K562 (cell line): ENCODE measurements at regions of chr16 and their contacts with region 1.

Region 1: GRCh38 chr16:48385272-48386150 is at the start of gene SIAH1:
- DNase-seq: peak; percentile 91 to 94 (median 92)
- ATAC-seq: peak; percentile 81
- H3K4me3 ChIP-seq: peak within 1 kb of the TSS; percentile 85
- H3K27ac ChIP-seq: peak within 1 kb of the TSS; percentile 95
- H3K4me1 ChIP-seq: peaks cover 15% of the 10 kb centered on the region in 2 experiments; a peak in 4 of 5 replicates
- H3K27me3 ChIP-seq: no peaks in the 10 kb centered on the region
- CTCF ChIP-seq: no peak
- EP300 ChIP-seq: no peak
- POLR2A ChIP-seq: peak; percentile 80
- RAD21 ChIP-seq: no peak
- polyA plus RNA-seq, gene SIAH1: 4.1 to 6.5 TPM

Region 2: GRCh38 chr16:48365581-48366164 is 19.8 kb before region 1 on chr16:
- CTCF ChIA-PET with region 1: no interaction called
- POLR2A ChIA-PET with region 1: interaction called, 35 read pairs
- in situ Hi-C with region 1: no loop called
- intact Hi-C with region 1: loop called (anchors 2 kb)
- DNase-seq: peak; percentile 86 to 93 (median 89)
- ATAC-seq: peak; percentile 98
- H3K4me3 ChIP-seq: peak overlapping the region; percentile 50
- H3K27ac ChIP-seq: peak overlapping the region; percentile 80
- H3K4me1 ChIP-seq: peaks cover 16 to 31% of the 10 kb centered on the region in 2 experiments
- H3K27me3 ChIP-seq: no peaks in the 10 kb centered on the region
- CTCF ChIP-seq: peak; percentile 14 to 27 (median 20); a peak in 2 of 6 replicates
- EP300 ChIP-seq: no peak
- POLR2A ChIP-seq: peak; percentile 80
- RAD21 ChIP-seq: no peak

Region 3: DNA sequence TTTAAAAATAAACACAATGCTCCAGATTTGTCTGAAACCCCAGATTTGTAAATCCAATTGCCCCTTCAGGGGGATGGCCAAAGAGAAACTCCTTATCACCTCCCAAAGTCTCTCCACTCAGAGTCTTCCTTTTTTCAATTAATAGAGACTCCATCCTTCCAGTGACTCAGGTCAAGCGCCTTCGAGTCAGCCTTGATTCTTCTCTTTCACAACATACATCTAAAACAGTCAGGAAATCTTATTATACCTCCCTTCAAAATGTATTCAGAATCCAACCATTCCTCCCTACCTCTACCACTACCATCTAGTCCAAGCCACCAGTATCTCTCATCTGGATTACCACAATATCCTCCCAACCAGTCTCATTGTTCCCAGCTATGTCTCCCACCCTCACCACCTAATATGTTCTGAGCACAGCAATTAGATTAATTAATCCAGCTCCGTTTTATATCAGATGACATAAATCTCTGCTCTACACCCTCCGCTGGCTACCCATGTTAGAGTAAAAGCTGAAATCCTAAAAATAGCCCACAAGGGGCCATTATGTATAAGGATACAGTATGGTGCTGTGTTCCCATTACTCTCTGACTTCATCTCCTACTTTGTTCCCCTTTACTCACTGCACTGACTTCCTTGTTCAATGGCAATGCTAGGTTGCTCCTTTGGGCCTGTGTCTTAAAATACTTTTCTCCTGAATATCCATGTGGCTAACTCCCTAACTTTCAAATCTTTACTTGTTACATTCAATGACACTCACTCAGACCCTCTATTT is 12.1 kb before region 1 on chr16:
- CTCF ChIA-PET with region 1: no interaction called
- POLR2A ChIA-PET with region 1: interaction called, 16 read pairs
- in situ Hi-C with region 1: no loop called
- intact Hi-C with region 1: no loop called
- DNase-seq: no peak
- ATAC-seq: peak; percentile 39; the same call in 2 of the 3 replicates
- H3K4me3 ChIP-seq: no peak overlapping the region
- H3K27ac ChIP-seq: no peak overlapping the region
- H3K4me1 ChIP-seq: peaks cover 7 to 19% of the 10 kb centered on the region in 2 experiments; a peak in 4 of 5 replicates
- H3K27me3 ChIP-seq: no peaks in the 10 kb centered on the region
- CTCF ChIP-seq: no peak
- EP300 ChIP-seq: no peak
- POLR2A ChIP-seq: no peak
- RAD21 ChIP-seq: no peak